ENCODE measurements at regions of chr1 and their contacts with region 1.

Region 1: DNA sequence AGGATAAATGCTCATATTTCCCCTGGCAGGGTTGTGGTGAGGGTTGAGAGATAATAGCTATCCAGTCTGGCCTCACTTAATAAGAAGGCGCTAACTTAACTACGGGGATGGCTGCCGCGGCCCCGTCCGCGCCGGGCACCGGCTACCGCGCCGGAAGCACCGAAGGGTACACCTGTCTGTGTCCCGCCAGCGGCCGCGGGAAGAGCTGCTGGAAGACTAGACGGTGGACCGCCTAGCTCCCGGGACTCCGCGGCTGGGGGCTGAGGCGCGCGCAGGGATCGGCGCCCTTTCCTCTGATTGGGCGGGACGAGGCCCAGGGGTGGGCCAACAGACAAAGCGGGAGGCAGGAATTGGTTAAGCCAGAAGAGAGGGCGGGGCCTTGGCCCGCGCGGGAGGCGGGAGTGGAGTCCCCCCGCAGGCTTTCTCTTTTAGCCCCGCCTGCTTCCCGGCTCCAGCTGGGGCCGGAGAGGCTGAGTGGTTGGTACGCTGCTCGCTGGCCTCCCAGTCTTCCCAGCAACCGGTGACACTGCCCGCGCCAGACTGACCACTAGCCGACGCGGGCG is at the start of gene ZNF672:
- DNase-seq: peak; percentile 96
- H3K4me3 Mint-ChIP-seq: no peak within 1 kb of the TSS
- H3K27ac Mint-ChIP-seq: no peak within 1 kb of the TSS
- H3K4me1 Mint-ChIP-seq: peaks cover 22% of the 10 kb centered on the region
- H3K27me3 Mint-ChIP-seq: peaks cover 2% of the 10 kb centered on the region
- total RNA-seq, gene ZNF672: 51.6 to 53.4 TPM

Region 2: DNA sequence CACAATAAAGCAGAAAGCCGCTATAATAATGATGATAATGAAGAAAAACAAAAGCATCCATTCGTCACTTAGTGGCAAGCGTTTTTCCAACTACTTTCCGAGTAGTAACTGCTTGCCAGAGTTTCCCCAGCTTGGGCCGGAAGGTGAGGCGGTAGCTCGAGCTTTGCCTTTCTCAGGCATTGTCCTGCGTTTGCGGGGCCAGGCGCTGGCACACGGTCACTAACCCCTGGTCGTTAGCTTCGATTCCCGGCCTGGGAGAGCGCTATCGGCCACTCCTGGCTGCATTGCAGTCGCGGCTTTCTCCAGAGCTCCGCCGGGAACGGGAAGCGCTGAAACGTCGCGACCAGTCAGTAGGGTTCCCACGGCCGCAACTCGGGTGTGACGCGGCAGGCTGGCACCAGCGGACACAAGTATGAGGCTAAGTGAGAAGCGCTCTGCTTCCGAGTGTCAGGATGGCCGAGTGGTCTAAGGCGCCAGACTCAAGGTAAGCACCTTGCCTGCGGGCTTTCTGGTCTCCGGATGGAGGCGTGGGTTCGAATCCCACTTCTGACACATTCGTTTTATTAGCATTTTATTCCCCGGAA is 35.6 kb after region 1 on chr1:
- CTCF ChIA-PET with region 1: no interaction called
- intact Hi-C with region 1: loop called (anchors 1 kb)
- DNase-seq: peak; percentile 96
- H3K4me3 Mint-ChIP-seq: peak overlapping the region; percentile 85
- H3K27ac Mint-ChIP-seq: peak overlapping the region; percentile 93
- H3K4me1 Mint-ChIP-seq: peaks cover 16% of the 10 kb centered on the region
- H3K27me3 Mint-ChIP-seq: peaks cover 3% of the 10 kb centered on the region

Region 3: DNA sequence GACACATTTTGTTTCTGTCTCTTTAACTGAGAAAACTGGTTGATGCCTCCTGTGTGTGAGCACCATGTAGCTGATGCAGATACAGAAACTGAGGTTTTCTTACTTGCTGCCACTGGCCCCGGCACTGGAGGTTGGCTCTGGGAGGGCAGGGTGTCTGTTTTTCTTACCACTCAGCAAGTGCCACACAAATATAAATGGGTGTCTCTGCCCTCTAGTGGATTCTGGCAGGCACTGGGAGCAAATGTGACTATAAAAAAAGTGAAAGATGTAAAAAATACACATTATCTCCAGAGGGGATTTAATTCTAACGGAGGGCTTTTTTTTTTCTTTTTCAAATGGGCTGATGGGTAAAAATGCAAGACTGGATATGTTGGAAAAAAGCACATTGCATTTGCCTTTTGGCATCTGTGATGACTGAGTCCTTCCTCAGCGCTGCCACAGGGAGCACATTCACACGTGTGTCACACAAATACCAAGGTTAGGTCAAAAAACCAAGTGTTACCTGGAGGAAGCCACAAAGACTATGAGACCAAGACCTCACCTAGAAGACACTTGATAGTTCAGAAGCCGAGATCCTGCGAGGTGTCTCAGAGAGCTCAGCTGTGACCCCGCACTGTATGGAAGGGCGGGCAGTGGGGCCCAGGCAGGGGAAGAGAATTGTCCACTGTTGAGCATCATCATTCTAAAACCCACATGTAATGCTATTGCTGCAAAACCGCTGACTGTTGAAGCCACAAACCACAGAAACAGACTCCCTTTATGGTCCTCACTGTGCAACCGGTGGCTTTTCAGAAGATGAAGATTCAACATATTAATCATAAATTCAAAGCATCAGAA is 87.0 kb after region 1 on chr1:
- CTCF ChIA-PET with region 1: interaction called, 5 read pairs
- intact Hi-C with region 1: loop called (anchors 1 kb)
- DNase-seq: peak; percentile 75
- H3K4me3 Mint-ChIP-seq: no peak overlapping the region
- H3K27ac Mint-ChIP-seq: no peak overlapping the region
- H3K4me1 Mint-ChIP-seq: peaks cover 8% of the 10 kb centered on the region
- H3K27me3 Mint-ChIP-seq: no peaks in the 10 kb centered on the region